ENCODE measurements at regions of chr10 and their contacts with region 1.

Region 1: DNA sequence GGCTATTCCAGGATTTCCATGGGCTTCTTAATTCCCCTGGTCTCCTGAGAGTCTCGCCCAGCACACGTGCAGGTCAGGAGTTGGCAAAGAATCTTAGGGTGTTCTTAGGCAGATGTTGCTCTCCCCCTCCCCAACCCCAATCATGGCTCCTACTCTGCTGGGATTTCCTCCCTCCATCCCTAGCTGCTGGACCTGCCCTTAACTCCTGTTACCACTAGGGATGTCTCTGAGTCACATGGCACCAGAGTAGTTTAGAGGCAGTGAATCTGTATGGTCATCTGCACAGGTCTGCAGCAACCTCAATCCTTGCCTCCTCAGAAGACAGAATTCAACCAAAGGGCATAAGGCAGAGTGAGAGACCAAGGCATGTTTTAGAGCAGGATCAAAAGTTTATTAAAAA is 51.8 kb upstream of the CHST3 start:
- DNase-seq: peak in 1 of 2 experiments; percentile 35
- ATAC-seq: peak; percentile 83 to 85
- H3K4me3 ChIP-seq: no peak overlapping the region
- H3K27ac ChIP-seq: no peak overlapping the region
- H3K4me1 ChIP-seq: 0 out of 3 replicates have a peak, but pooled peaks cover 3% of the 10 kb centered on the region
- CTCF ChIP-seq: no peak
- EP300 ChIP-seq: no peak
- POLR2A ChIP-seq: no peak
- RAD21 ChIP-seq: no peak

Region 2: GRCh38 chr10:71902351-71902750 is 10.1 kb before region 1 on chr10:
- CTCF ChIA-PET with region 1: interaction called, 12 read pairs
- POLR2A ChIA-PET with region 1: no interaction called
- DNase-seq: no peak
- ATAC-seq: no peak
- H3K4me3 ChIP-seq: no peak overlapping the region
- H3K27ac ChIP-seq: no peak overlapping the region
- H3K4me1 ChIP-seq: no peaks in the 10 kb centered on the region
- CTCF ChIP-seq: no peak
- EP300 ChIP-seq: no peak
- POLR2A ChIP-seq: no peak
- RAD21 ChIP-seq: no peak

Region 3: DNA sequence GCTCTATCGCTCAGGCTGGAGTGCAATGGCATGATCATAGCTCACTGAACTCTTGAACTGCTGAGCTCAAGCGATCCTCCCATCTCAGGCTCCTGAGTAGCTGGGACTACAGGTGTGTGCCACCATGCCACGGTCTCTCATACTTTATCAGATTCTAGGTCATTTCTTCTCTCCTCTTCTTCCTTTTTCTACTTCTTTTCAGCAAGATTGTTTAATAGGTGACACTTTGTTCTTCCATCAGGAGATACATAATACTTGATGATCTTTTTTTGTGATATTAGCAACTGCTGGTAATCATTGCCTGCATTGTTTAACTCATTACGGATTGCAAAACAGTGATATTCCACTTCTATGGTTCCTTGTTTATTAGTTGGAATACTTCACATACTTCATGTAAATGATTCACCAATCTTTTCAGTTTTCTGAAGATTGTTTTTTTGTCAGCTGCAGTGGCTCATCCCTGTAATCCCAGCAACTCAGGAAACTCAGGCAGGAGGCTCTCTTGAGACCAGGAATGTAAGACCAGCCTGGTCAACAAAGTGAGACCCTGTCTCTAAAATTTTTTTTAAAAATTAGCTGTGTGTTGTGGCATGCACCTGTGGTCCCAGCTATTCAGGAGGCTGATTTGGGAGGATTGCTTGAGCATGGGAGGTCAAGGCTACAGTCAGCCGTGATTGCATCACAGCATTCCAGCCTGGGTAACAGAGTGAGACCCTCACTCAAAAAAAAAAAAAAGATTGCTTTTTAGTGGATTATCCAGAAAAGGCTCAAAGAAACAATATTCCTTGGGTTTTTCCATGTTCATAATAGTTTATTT is 15.6 kb after region 1 on chr10:
- CTCF ChIA-PET with region 1: interaction called, 12 read pairs
- POLR2A ChIA-PET with region 1: no interaction called
- DNase-seq: peak; percentile 34 to 66
- ATAC-seq: peak; percentile 66 to 82; a peak in 5 of 6 replicates
- H3K4me3 ChIP-seq: no peak overlapping the region
- H3K27ac ChIP-seq: peak overlapping the region; percentile 62 to 74
- H3K4me1 ChIP-seq: peaks cover 26% of the 10 kb centered on the region
- CTCF ChIP-seq: no peak
- EP300 ChIP-seq: no peak
- POLR2A ChIP-seq: no peak
- RAD21 ChIP-seq: no peak

Region 4: DNA sequence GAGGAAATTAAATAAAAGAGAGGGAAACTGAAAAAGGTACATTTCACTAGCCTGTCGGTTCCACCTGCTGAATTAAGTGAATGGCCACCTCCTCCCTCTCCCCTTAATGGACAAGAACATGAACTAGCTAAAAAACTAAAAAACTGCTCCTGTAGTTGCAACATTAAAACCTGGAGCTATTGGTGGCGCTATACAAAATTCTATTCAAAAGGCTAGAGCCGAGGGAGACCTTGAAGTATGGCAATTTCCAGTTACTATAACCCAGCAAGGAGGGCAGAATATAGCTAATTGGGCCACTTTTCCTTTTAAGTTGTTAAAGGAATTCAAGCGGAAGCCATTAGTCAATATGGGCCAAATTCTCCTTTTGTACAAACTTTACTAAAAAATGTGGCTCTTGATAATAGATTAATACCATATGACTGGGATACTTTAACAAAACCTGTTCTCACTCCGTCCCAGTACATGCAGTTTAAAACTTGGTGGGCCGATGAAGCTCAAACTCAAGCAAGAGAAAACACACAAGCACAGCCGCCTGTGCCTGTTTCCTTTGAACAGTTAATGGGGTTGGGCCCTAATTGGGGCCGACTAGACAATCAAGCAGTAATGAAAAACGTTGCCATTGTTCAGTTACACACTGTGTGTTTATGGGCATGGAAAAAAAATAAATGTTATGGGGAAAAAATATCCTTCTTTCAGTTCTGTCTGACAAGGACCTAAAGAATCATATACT is 45.3 kb after region 1 on chr10:
- CTCF ChIA-PET with region 1: interaction called, 13 read pairs
- POLR2A ChIA-PET with region 1: no interaction called
- DNase-seq: peak in 1 of 2 experiments; percentile 47
- ATAC-seq: peak in 1 of 2 experiments; percentile 52; a peak in 3 of 6 replicates
- H3K4me3 ChIP-seq: no peak overlapping the region
- H3K27ac ChIP-seq: peak overlapping the region; percentile 72 to 84; a peak in 5 of 6 replicates
- H3K4me1 ChIP-seq: peaks cover 23% of the 10 kb centered on the region
- CTCF ChIP-seq: peak; percentile 23; the same call in 2 of the 3 replicates
- EP300 ChIP-seq: no peak
- POLR2A ChIP-seq: no peak
- RAD21 ChIP-seq: no peak

Region 5: GRCh38 chr10:71974489-71975021 is 62.1 kb after region 1 on chr10:
- CTCF ChIA-PET with region 1: interaction called, 12 read pairs
- POLR2A ChIA-PET with region 1: no interaction called
- DNase-seq: peak; percentile 80 to 84
- ATAC-seq: peak; percentile 65 to 69
- H3K4me3 ChIP-seq: no peak overlapping the region
- H3K27ac ChIP-seq: peak overlapping the region; percentile 87 to 98
- H3K4me1 ChIP-seq: peaks cover 100% of the 10 kb centered on the region
- CTCF ChIP-seq: no peak
- EP300 ChIP-seq: peak in 1 of 2 experiments; percentile 39; a peak in 1 of 5 replicates
- POLR2A ChIP-seq: no peak
- RAD21 ChIP-seq: no peak

Measured in A549 (cell line).